Stomach (tissue), 19 donors: ENCODE measurements at regions of chr20 and their contacts with region 1.

Region 1: DNA sequence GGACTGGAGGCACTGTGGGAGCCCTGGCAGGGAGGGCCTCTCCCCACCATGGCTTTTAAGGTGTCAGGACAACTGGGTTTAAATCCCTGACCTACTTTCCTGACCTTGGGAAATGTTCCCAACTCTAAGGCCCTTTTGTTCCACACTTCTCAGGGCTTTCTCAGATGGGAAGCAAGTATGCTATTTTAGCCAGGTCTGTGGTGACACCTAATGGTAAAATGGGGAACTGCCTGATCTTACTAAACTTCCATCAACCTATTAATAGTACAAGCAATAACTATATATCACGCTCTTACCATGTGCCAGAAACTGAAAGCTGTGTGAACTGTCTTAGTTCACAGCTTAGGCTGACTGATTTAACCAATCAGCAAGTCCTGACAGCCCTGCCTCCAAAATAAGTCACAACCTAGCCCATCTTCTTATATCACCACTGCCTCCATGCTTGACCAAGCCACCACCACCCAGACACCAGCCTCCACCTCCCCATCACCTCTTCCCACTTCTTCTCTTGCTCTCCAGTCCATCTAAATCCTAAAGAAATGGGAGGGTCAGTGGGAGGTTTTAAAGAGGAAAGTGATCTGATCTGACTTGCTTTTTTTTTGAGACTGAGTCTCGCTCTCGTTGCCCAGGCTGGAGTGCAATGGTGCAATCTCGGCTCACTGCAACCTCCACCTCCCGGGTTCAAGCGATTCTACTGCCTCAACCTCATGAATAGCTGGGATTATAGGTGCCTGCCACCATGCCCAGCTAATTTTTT is 6.9 kb upstream of the BLCAP start:
- DNase-seq: peak; percentile 46 to 93
- H3K4me3 ChIP-seq: no peak overlapping the region
- H3K27ac ChIP-seq: no peak overlapping the region
- H3K4me1 ChIP-seq: peaks cover 0 to 10% (median 3%) of the 10 kb centered on the region in 4 donors
- H3K27me3 ChIP-seq: no peaks in the 10 kb centered on the region
- CTCF ChIP-seq: peak in 5 of 7 experiments; percentile 79 to 95 (median 89)
- EP300 ChIP-seq: no peak
- POLR2A ChIP-seq: no peak

Region 2: GRCh38 chr20:37265152-37265551 is 269.4 kb before region 1 on chr20:
- intact Hi-C with region 1: loop called (anchors 5 kb)
- DNase-seq: no peak
- H3K4me3 ChIP-seq: no peak overlapping the region
- H3K27ac ChIP-seq: no peak overlapping the region
- H3K4me1 ChIP-seq: peaks cover 0 to 6% (median 2%) of the 10 kb centered on the region in 4 donors
- H3K27me3 ChIP-seq: peaks cover 0 to 6% (median 0%) of the 10 kb centered on the region in 3 donors
- CTCF ChIP-seq: no peak
- EP300 ChIP-seq: no peak
- POLR2A ChIP-seq: no peak

Region 3: GRCh38 chr20:37384683-37385174 is 149.8 kb before region 1 on chr20:
- intact Hi-C with region 1: loop called (anchors 10 kb)
- DNase-seq: peak; percentile 69 to 86
- H3K4me3 ChIP-seq: peak overlapping the region; percentile 41 to 50 (median 48)
- H3K27ac ChIP-seq: peak overlapping the region in 2 of 5 donors; percentile 63 to 79
- H3K4me1 ChIP-seq: peaks cover 27 to 58% (median 41%) of the 10 kb centered on the region in 4 donors
- H3K27me3 ChIP-seq: no peaks in the 10 kb centered on the region
- CTCF ChIP-seq: peak in 5 of 7 experiments; percentile 81 to 95 (median 90)
- EP300 ChIP-seq: no peak
- POLR2A ChIP-seq: no peak

Region 4: DNA sequence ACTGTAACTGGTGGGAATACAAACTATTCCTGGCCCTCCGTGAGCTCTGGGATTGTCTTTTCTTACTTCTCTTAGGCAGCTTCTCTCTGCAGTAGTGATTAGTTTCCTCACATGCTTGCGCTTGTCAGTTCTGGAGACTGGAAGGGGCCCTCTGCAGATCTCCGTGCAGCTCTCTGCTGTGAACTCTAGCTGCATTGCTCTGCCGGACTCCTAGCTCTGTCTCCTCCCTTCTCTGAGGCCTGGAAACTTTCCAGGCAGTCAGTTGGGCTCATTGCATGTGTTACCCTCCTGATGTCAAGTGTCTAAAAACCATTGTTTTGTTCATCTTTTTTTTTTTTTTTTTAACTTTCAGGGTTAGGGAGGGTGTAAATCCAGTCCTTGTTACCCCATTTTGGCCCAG is 261.5 kb after region 1 on chr20:
- intact Hi-C with region 1: no loop called
- DNase-seq: no peak
- H3K4me3 ChIP-seq: no peak overlapping the region
- H3K27ac ChIP-seq: no peak overlapping the region
- H3K4me1 ChIP-seq: no peaks in the 10 kb centered on the region
- H3K27me3 ChIP-seq: no peaks in the 10 kb centered on the region
- CTCF ChIP-seq: no peak
- EP300 ChIP-seq: no peak
- POLR2A ChIP-seq: no peak